Dorsolateral prefrontal cortex (tissue), 120 donors: ENCODE measurements at regions of chr14 and their contacts with region 1.

Region 1: DNA sequence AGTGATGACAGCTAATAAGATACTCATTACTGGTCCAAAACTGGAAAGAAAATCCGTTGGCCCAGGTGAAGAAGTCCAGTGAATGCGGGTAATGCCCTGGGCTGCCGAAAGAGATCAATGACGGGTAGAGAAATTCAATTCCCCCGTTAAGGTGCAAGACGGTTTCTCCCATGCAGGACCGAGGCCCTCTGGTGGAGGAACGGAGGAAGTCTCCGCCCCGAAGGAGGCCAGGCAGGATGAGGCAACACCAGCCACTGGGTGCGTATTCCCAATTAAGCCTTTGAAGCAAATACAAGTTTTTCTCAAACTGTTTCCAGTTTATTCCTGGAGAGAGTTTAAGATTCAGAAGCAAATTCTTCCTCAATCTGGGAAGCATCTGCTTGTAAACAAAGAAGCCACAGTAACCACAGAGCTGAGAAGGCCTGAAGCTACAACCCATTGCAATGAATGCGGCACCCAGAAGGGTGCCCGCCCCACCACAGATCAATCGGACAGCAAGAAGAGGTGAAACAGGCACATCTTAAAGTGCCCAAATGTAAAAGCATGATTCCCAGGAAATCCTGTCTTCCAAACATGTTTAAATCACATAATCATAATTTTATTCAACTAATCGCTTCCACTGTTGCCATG is 118.5 kb downstream of the TTC7B start:
- DNase-seq: peak; percentile 75 to 93 (median 90)
- H3K4me3 ChIP-seq: peak overlapping the region in 36 of 59 donors; percentile 2 to 45 (median 24)
- H3K27ac ChIP-seq: peak overlapping the region; percentile 72 to 97 (median 91)
- H3K27me3 ChIP-seq: no peaks in the 10 kb centered on the region
- CTCF ChIP-seq: peak; percentile 89 to 99 (median 97)

Region 2: GRCh38 chr14:90383075-90383730 is 314.5 kb before region 1 on chr14:
- intact Hi-C with region 1: loop called in 1 of 2 experiments (anchors 5 kb)
- DNase-seq: peak; percentile 99 to 100 (median 100)
- H3K4me3 ChIP-seq: peak overlapping the region; percentile 48 to 85 (median 71)
- H3K27ac ChIP-seq: peak overlapping the region; percentile 98 to 100 (median 100)
- H3K27me3 ChIP-seq: no peaks in the 10 kb centered on the region
- CTCF ChIP-seq: peak in 53 of 56 donors; percentile 2 to 64 (median 37)

Region 3: DNA sequence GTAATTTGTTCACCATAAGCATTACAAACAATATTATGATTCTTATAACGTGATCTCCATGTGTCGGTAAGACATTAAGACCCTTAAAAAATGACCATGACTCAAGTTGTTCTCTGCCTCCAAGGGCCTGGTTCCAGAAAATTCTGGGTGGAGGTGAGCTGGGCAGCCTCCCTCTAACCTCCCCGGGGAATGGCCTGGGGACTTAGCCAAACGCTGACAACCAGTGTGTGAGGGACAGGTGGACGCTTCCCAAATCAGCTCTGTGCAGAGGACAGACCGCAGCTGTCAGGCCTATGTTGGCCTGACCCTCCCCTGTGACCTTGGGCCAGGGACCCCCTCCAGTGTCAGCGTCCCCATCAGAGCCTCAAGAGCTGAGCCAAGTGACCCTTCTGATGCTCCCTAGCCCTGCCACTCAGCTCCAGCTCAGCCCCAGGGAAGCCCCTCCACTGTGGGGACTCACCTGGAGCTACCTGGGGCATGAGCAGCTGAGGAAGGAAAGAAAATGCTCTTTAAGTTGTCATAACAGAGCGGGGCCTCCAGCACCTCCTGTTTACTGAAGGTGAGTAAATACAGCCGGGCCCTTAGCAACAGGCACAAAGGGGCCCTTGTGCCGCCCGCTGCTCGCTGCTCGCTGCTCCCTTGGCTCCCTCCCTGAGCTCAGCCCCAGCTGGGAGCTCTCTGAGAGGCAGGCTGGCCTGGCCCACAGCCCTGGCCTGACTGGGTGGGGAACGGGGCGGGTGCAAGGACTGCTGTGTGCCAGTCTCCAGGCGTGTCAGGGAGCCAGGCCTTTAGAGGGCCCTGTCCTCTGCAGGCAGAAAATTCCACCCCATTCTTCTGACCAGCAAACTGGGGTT is 184.3 kb before region 1 on chr14:
- intact Hi-C with region 1: loop called in 1 of 2 experiments (anchors 5 kb)
- DNase-seq: peak; percentile 59 to 98 (median 97)
- H3K4me3 ChIP-seq: peak overlapping the region in 7 of 59 donors; percentile 17 to 47 (median 27)
- H3K27ac ChIP-seq: peak overlapping the region; percentile 88 to 100 (median 99)
- H3K27me3 ChIP-seq: no peaks in the 10 kb centered on the region
- CTCF ChIP-seq: peak in 44 of 56 donors; percentile 10 to 59 (median 34)

Region 4: DNA sequence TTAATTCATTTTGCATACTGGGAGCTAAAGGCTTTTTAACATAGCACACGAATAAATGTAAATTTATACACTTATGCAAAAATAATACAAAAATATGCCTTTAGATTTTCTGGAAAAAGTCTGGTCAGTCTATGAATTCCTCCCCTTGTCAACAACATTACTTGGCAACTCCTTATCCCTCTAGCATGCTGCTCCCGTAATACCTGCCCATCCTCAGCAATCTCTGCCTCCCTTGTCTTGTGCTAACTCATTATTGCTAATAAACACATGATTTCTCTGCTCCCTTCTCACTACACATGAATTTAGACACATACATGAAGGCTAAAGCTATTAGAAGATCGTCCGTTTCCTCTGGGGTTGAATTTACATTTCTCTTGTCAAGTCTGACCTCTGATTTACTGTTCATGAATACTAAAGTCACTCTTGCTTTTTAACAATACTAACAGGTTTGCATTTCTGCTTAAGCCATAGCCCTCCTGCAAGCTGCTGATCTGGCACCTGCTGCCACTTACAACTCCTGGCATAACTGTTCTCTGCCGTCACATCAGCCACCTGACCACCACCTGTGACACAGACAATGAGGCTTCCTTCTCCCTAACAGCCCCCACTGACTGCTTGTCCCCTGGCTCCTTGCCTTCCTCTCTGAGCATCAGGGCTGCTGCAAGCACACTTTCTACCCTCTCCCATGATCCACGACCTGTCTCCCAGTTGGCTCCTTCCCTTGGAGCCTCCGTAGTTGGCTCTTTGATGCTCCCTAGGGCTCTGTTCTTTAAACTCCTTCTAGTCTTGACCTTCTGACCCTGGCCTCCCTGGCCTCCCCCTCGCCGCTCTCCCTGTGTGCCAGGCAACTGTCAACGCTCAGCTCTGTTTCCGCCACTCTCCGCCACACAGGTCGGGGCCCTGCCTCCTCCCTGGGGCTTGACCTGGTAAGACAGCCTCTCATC is 123.2 kb before region 1 on chr14:
- intact Hi-C with region 1: loop called (anchors 5 to 10 kb)
- DNase-seq: peak in 2 of 10 donors; percentile 40 to 61
- H3K4me3 ChIP-seq: no peak overlapping the region
- H3K27ac ChIP-seq: peak overlapping the region in 55 of 59 donors; percentile 12 to 98 (median 77)
- H3K27me3 ChIP-seq: no peaks in the 10 kb centered on the region
- CTCF ChIP-seq: no peak

Region 5: GRCh38 chr14:90758028-90758889 is 60.6 kb after region 1 on chr14:
- intact Hi-C with region 1: loop called (anchors 1 to 2 kb)
- DNase-seq: peak; percentile 66 to 93 (median 80)
- H3K4me3 ChIP-seq: peak overlapping the region; percentile 39 to 80 (median 64)
- H3K27ac ChIP-seq: peak overlapping the region; percentile 87 to 100 (median 98)
- H3K27me3 ChIP-seq: no peaks in the 10 kb centered on the region
- CTCF ChIP-seq: peak; percentile 80 to 99 (median 96)